PC-9 (cell line): ENCODE measurements at regions of chr12 and their contacts with region 1.

Region 1: DNA sequence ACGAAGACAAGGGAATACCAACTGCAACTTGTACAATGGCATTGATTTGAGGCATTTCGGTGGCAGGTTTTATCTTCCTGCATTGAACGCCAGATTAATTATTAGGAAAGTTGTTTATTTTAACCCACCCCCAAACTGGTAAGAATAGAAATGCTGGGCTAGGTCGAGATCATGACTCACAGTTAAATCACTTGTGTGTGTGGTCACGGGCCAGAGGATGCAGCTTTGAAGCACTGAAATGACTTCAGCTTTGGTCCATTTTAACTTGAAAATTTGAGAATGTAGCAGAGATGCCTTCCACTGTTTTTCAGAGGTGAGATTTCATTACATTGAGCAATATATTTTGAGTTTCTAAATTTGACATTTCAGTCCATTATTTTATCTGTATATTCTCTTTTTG is 23.6 kb upstream of the KCNH3 start:
- DNase-seq: peak in 1 of 2 experiments; percentile 56
- H3K4me3 ChIP-seq: no peak overlapping the region
- H3K27ac ChIP-seq: no peak overlapping the region
- H3K4me1 ChIP-seq: peaks cover 11% of the 10 kb centered on the region
- H3K27me3 ChIP-seq: no peaks in the 10 kb centered on the region
- CTCF ChIP-seq: no peak

Region 2: GRCh38 chr12:49553512-49554088 is 38.3 kb after region 1 on chr12:
- CTCF ChIA-PET with region 1: no interaction called
- POLR2A ChIA-PET with region 1: no interaction called
- intact Hi-C with region 1: loop called (anchors 2 kb)
- DNase-seq: peak in 1 of 2 experiments; percentile 52
- H3K4me3 ChIP-seq: no peak overlapping the region
- H3K27ac ChIP-seq: no peak overlapping the region
- H3K4me1 ChIP-seq: no peaks in the 10 kb centered on the region
- H3K27me3 ChIP-seq: peaks cover 4% of the 10 kb centered on the region; the same call in 1 of the 2 replicates
- CTCF ChIP-seq: peak; percentile 77

Region 3: GRCh38 chr12:49609746-49610089 is 94.5 kb after region 1 on chr12:
- CTCF ChIA-PET with region 1: no interaction called
- POLR2A ChIA-PET with region 1: interaction called, 14 read pairs
- intact Hi-C with region 1: no loop called
- DNase-seq: no peak
- H3K4me3 ChIP-seq: no peak overlapping the region
- H3K27ac ChIP-seq: no peak overlapping the region
- H3K4me1 ChIP-seq: no peaks in the 10 kb centered on the region
- H3K27me3 ChIP-seq: no peaks in the 10 kb centered on the region
- CTCF ChIP-seq: no peak; the same call in 1 of the 2 replicates